Uterus (tissue), 4 donors: ENCODE measurements at regions of chr7 and their contacts with region 1.

Region 1: DNA sequence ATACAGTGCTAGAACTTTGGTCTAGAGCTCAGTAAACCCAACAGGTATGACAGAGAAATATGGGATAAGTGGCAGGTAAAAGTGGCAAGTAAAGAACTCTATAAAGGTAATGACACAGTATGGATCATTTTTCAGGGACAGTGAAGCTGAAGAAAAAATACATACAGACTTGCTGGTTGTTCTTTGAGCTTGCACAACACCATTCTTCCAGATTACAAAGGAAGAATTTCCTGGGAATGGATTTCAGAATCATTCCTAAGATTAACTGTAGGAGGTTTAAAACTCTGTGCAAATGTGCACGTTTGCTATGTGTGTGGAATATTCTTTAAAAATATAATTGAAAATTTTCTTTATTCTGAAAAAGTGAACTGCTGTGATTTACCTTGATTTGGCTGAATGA is 36.0 kb downstream of the PHF14 start:
- DNase-seq: no peak
- H3K4me3 ChIP-seq: no peak overlapping the region
- H3K27ac ChIP-seq: no peak overlapping the region
- H3K4me1 ChIP-seq: no peaks in the 10 kb centered on the region
- H3K27me3 ChIP-seq: no peaks in the 10 kb centered on the region
- CTCF ChIP-seq: no peak
- POLR2A ChIP-seq: no peak

Region 2: GRCh38 chr7:10860516-10860915 is 149.1 kb before region 1 on chr7:
- intact Hi-C with region 1: no loop called
- DNase-seq: no peak
- H3K4me3 ChIP-seq: no peak overlapping the region
- H3K27ac ChIP-seq: no peak overlapping the region
- H3K4me1 ChIP-seq: no peaks in the 10 kb centered on the region
- H3K27me3 ChIP-seq: no peaks in the 10 kb centered on the region
- CTCF ChIP-seq: no peak
- POLR2A ChIP-seq: no peak

Region 3: GRCh38 chr7:10998996-10999757 is 10.5 kb before region 1 on chr7:
- intact Hi-C with region 1: loop called (anchors 2 kb)
- DNase-seq: no peak
- H3K4me3 ChIP-seq: no peak overlapping the region
- H3K27ac ChIP-seq: no peak overlapping the region
- H3K4me1 ChIP-seq: no peaks in the 10 kb centered on the region
- H3K27me3 ChIP-seq: no peaks in the 10 kb centered on the region
- CTCF ChIP-seq: no peak
- POLR2A ChIP-seq: no peak